GM10248 (cell line): ENCODE measurements at regions of chr5 and their contacts with region 1.

Region 1: DNA sequence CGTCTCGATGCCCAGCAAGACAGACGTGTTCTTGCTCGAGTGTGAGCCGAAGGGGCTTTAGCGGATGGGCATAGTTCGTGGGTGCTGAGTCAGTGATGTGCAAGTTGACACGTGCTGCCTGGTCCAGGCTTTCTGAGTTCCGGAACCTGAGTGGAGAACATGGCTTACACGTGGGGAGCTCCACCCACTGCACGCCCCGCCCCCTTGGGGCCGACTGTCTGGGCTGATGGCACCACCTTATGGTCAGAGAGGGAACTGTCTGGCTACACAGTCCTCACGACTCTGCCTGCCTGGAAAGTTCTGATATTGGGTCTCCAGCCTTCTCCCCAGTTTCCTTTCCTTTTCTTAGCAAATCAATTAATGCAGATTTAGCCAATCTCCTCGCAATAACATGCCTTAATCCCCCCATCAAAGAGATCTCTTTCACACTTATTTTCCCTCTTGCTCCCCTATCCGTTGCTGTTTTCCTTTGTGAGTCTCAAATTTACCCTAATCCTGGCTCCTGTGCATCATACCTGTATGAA is 3.8 kb upstream of the STC2 start:
- DNase-seq: peak; percentile 90
- CTCF ChIP-seq: peak; percentile 86

Region 2: GRCh38 chr5:173163219-173163618 is 168.8 kb before region 1 on chr5:
- CTCF ChIA-PET with region 1: no interaction called
- POLR2A ChIA-PET with region 1: no interaction called
- DNase-seq: no peak
- CTCF ChIP-seq: no peak

Region 3: DNA sequence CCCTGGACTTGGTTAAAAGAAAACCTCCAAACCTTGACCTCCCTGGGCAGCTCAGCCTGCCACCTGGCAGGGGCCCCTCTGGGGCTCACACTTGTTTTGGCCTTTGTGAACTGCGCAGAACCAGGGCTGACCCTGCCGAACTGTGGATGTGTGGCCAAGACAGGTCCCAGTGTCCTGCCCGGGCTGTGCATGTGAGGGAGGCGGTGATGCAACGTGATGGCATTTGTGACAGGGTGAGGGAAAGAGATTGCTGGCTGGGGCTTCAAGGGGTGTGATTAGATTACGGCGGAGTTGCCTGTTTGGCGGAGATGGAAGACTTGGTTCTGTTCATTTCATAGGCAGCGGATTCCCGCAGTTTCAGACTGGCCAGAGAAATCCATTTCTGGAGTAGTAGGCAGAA is 66.6 kb before region 1 on chr5:
- CTCF ChIA-PET with region 1: no interaction called
- POLR2A ChIA-PET with region 1: no interaction called
- DNase-seq: no peak
- CTCF ChIP-seq: no peak

Region 4: DNA sequence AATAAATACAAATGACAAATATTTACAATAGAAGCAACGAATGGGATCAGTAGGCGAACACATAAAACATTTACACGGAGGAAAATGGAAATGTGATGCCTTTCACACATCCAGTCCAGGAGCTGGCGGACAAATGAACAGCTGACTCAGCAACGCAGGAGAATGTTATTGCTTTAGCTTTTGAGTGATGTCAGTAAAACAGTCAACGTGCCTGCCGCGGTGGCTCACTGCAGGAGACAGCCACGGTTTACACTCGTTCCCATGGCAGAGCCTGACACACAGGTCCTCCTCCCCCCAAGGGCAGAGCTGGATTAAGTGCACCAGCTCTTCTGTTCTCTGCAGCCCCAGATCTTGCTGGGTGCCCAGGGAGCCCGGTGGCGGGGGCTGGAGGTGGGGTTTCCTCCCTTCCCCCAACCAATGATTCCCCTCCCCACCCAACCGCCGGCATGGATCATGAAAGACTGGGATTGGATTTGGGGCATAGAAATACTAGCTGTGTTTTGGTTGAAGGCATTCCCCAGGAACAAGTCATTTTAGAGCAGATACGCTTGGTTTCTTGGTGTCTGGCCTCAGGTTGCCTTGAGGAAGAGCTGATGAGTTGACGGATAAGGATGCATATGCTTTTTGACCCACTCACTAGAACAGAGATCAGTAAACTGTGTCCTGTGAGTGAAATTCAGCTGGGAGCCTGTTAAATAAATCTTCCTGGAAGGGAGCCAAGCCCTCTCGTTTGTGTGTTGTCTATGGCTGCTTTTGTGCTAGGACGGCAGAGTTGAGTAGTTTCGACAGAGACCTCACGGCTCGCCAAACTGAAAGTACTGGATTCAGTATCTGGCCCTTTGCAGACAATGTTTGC is 16.3 kb before region 1 on chr5:
- CTCF ChIA-PET with region 1: interaction called, 80 read pairs
- POLR2A ChIA-PET with region 1: interaction called, 3 read pairs
- DNase-seq: no peak
- CTCF ChIP-seq: no peak

Region 5: GRCh38 chr5:173435447-173435846 is 103.4 kb after region 1 on chr5:
- CTCF ChIA-PET with region 1: no interaction called
- POLR2A ChIA-PET with region 1: no interaction called
- DNase-seq: no peak
- CTCF ChIP-seq: no peak